Spleen (tissue), 13 donors: ENCODE measurements at regions of chr21 and their contacts with region 1.

Region 1: GRCh38 chr21:36330904-36331303 is 10.9 kb downstream of the MORC3 start:
- DNase-seq: no peak
- H3K4me3 ChIP-seq: no peak overlapping the region
- H3K27ac ChIP-seq: peak overlapping the region in 6 of 8 donors; percentile 1 to 71 (median 52)
- H3K4me1 ChIP-seq: peaks cover 28 to 95% (median 61%) of the 10 kb centered on the region in 6 donors
- H3K27me3 ChIP-seq: no peaks in the 10 kb centered on the region
- CTCF ChIP-seq: peak; percentile 58 to 82 (median 73)
- POLR2A ChIP-seq: no peak

Region 2: GRCh38 chr21:36141513-36141925 is 189.4 kb before region 1 on chr21:
- intact Hi-C with region 1: loop called (anchors 5 kb)
- DNase-seq: peak; percentile 88
- H3K4me3 ChIP-seq: no peak overlapping the region
- H3K27ac ChIP-seq: no peak overlapping the region
- H3K4me1 ChIP-seq: peaks cover under 1 to 32% (median 19%) of the 10 kb centered on the region in 6 donors
- H3K27me3 ChIP-seq: no peaks in the 10 kb centered on the region
- CTCF ChIP-seq: peak; percentile 64 to 93 (median 88)
- POLR2A ChIP-seq: no peak

Region 3: DNA sequence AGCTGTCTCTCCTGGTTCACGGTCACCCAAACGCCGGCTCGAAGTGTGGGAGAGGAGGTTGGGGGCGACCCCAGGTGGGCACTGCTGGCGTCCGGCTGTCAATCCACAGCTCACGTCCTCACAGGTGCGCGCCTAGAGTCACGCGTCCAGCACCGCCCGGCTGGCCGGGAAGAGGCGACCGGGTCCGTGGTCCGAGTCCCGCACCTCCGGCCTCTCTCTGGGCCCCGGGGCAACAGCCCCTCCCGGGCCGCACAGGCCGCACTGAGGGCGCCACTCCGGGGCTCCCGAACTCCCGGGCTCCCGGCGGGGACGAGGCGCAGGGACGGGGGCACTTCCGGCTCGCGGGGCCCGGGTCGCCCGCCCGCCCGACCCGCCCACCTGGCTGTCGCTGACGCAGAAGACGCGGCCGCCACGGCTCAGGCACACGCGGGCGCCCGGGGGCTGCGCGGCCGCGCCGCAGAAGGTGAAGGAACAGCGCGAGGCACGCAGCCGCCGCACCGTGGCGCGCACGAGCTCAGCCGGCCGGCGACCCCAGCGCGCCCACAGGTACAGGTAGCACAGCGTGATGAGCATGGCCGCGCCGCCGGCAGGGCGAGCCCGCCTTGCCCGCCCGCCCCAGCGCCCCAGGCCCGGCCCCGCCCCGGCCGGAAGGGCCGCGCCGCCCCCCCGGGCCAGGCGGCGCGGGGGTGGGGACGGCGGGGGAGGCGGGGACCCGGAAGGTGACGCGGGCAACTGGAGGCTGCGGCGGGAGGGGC is 635.3 kb after region 1 on chr21 and contains the start of gene HLCS:
- intact Hi-C with region 1: no loop called
- DNase-seq: peak; percentile 92
- H3K4me3 ChIP-seq: peak within 1 kb of the TSS; percentile 56 to 87 (median 66)
- H3K27ac ChIP-seq: peak within 1 kb of the TSS; percentile 67 to 91 (median 82)
- H3K4me1 ChIP-seq: peaks cover 0 to 27% (median 16%) of the 10 kb centered on the region in 6 donors
- H3K27me3 ChIP-seq: peaks cover 0 to 4% (median 0%) of the 10 kb centered on the region in 7 donors
- CTCF ChIP-seq: peak in 4 of 11 experiments; percentile 31 to 34 (median 34)
- POLR2A ChIP-seq: no peak
- total RNA-seq, gene HLCS: 10.1 to 22.8 (median 18.1) TPM